ENCODE measurements at regions of chr13 and their contacts with region 1.

Region 1: GRCh38 chr13:43686557-43686956 is 100.2 kb downstream of the ENOX1 start:
- DNase-seq: no peak
- ATAC-seq: peak; percentile 80

Region 2: DNA sequence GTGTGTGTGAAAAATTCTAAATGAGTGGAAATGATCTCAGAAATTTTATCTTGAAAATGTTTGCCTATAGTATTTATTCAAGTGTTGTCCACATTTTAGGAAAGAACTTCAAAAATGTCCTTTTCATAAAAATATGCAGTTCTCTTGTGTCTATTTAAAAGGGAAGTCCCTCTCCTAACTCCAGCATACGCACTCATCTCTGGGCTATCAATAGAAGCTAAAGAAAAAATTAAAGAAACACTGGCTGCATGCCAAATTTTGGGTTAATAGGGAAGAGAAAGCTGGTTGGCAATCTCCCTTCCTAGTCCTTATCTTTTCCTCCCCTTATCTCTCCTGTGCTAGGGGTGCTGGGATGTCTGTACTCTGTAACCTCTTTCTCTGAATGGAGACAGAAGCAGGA is 213.1 kb before region 1 on chr13:
- intact Hi-C with region 1: loop called (anchors 5 kb)
- DNase-seq: no peak
- ATAC-seq: peak; percentile 42

Region 3: GRCh38 chr13:43510956-43511901 is 175.3 kb before region 1 on chr13:
- intact Hi-C with region 1: no loop called
- DNase-seq: no peak
- ATAC-seq: peak; percentile 51

Region 4: DNA sequence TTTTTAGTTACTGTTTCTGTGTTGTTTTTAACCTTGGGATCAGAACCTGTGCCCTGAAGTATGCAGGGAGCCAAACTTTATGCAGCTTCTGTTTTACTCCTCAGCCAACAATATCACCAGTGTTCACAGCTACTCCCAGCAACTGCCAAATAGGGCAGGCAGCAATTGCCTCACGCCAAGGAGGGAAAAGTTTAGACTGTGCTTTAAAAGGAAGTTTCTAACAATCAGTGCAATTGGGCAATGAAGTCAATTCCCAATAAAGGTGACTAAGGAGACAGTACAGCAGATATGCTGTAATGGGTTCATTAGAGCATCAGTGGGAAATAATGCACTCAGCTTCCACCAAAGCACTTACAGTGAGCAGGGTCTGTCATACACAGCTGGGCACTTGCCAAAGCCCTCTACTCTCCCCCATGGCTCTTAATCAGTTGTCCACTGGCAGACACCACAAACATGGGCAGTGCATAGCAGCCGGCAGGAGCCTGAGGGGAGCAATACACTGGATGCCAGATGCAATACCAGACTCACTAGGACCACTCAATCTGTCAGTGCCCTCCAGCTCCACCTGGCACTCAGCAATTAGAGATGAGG is 80.9 kb after region 1 on chr13:
- intact Hi-C with region 1: loop called (anchors 5 kb)
- DNase-seq: no peak
- ATAC-seq: peak; percentile 91

Measured in Right ventricle myocardium inferior (tissue), 1 donor.